ENCODE measurements at regions of chr1 and their contacts with region 1.

Region 1: DNA sequence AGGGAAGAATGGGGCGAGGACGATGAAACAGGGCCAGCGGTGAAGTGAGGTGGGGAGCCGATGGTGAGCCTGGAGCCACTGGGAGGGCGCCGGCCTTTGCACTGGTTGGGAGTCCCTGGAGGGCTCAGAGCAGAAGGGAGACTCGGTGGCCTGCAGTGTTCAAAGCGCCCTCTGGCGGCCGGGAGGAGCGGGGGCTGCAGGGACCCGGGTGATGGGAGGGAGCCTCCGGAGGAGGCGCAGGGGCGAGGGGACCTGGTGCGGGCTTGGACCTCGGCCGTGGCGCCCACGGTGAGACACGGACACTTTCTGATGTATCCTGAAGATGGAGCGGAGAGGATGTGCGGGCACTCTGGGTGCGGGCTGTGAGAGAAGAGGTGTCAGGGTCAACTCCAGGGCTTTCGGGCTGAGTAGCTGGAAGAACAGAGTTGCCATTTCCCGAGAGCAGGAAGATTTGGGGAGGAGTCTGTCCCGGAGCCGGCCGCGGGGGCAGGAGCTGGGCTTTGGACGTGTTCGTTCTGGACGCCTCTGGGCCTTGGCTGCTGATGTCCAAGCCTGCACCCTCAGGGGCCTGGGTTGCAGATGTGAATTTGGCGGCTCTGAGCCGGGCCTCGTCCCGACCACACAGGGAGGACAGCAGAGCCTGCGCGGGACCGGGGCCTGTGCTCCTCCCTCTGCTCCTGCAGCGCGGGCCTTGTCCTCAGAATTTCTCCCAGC is 29.7 kb downstream of the HEYL start:
- DNase-seq: peak; percentile 87

Region 2: DNA sequence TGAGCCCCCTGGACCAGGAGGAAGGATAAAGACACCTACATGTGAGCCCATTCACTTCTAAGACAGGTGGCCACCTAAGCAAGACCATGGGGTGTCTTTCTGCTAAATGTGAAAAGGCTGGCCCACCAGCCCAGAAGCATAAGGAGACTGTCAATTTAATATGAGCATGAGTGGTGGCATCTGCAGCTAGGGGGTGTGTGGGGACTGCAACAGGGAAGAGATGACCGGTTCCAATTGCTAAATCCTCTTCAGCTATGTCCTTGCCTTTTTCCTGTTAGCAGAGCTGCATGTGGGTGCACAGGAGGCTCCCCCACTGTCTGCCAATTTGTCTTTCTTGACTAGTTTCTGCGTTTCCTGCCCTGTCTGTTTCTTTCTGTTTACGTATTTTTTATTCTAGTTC is 140.6 kb before region 1 on chr1:
- CTCF ChIA-PET with region 1: no interaction called
- POLR2A ChIA-PET with region 1: no interaction called
- DNase-seq: no peak

Region 3: DNA sequence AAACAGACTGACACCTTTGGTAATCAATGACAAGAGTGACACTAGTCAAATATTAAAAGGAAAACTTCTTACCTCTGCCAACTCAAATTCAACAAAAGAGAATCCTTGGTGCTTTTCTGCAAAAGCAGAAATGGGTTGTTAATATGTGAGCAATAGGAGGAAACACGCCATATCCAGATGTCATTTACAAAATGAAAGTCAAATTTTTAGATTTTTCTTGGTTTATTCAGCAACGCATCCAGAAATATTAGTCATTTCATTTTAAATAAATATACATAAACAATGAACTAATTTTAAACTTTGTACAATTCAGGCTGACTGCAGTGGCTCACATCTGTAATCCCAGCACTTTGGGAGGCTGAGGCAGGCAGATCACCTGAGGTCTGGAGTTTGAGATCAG is 55.5 kb before region 1 on chr1:
- CTCF ChIA-PET with region 1: no interaction called
- POLR2A ChIA-PET with region 1: no interaction called
- DNase-seq: no peak

Region 4: DNA sequence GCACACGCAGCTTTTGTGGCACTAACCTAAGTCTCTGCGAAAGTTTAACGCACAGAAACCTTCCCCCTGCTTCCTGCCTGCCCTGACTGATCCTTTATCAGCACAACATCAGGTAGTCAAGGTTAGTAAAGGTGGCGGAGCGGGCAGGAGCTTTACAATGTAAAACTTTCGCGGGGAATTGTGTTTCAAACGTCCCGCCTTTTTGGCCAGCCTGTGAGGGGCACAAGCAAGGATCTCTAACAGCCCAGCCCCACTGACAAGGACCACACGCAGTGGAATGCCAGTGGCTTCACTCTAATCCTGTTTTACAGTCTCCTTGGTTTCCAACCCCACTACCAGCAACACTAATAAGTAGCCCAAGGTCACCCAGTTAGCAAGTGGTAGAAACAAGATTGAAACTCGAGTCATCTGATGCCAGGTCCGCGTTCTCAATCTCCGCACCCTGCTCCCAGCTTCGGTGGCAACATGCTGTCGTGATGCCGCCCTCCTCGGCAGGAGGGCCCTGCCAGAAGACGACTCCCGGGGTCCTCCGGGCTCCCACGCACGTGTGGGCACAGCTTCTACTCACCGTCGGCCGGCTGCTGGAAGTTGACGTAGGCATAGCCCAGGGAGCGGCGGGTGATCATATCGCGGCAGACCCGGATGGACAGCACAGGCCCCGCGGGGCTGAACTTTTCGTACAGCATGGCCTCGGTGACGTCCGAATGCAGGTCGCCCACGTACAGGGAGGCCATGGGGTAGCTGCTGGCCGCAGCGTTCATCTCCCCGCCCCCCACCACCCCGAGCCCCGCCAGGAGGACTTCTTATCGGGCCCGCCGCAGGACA is 34.4 kb before region 1 on chr1:
- CTCF ChIA-PET with region 1: interaction called, 18 read pairs
- POLR2A ChIA-PET with region 1: interaction called, 3 read pairs
- DNase-seq: no peak

Region 5: DNA sequence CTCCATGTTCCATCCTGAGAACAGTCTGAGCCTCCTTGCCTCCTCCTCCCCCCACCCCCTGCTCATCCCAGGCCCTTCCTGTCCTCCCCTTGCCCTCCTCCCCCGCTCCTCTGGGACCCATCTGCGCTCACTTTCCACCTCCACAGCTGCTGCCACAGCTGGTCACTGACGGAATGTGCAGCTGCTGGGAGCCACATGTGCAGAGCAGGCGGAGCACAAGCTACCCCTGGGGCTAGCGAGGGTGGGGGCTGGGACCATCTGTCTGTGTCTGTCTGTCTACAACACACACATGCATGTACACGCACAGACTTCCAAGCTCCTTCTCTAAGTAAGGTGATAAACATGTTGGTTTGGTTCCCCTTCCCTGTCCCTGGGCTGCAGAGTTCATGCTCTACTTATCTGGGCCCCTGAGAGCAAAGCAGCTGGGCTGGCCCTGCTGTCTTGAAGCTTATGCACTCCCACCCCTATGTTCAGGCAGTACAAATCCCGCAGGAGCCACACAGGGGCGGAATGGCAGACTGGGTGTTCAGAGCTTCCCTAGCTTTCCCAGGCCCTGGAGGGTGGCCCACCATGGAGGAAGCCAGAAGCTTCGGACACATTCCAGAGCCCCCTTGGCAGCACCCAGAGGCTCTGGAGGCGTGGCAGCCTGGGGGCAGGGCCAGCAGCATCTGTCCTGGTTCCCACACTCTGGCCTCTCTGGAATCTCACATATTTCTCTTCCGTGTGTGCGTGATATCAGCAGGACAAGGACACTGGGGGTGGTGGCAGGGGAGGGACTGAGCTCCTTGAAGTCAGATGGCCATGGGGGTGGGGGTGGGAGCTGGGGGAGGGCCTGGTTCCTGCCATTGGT is 36.7 kb after region 1 on chr1:
- CTCF ChIA-PET with region 1: interaction called, 13 read pairs
- POLR2A ChIA-PET with region 1: no interaction called
- DNase-seq: no peak

Region 6: GRCh38 chr1:39653546-39654031 is 43.8 kb after region 1 on chr1:
- CTCF ChIA-PET with region 1: interaction called, 42 read pairs
- POLR2A ChIA-PET with region 1: interaction called, 4 read pairs
- DNase-seq: peak; percentile 72

Region 7: GRCh38 chr1:39672551-39672947 is 62.8 kb after region 1 on chr1:
- CTCF ChIA-PET with region 1: interaction called, 17 read pairs
- POLR2A ChIA-PET with region 1: interaction called, 3 read pairs
- DNase-seq: peak; percentile 26

Region 8: GRCh38 chr1:39812913-39813312 is 203.1 kb after region 1 on chr1:
- CTCF ChIA-PET with region 1: no interaction called
- POLR2A ChIA-PET with region 1: no interaction called
- DNase-seq: no peak

Measured in HEK293T (cell line).